ENCODE measurements at regions of chr3 and their contacts with region 1.

Region 1: GRCh38 chr3:4850211-4850927 is 128.9 kb upstream of the BHLHE40 start:
- DNase-seq: no peak
- CTCF ChIP-seq: no peak

Region 2: DNA sequence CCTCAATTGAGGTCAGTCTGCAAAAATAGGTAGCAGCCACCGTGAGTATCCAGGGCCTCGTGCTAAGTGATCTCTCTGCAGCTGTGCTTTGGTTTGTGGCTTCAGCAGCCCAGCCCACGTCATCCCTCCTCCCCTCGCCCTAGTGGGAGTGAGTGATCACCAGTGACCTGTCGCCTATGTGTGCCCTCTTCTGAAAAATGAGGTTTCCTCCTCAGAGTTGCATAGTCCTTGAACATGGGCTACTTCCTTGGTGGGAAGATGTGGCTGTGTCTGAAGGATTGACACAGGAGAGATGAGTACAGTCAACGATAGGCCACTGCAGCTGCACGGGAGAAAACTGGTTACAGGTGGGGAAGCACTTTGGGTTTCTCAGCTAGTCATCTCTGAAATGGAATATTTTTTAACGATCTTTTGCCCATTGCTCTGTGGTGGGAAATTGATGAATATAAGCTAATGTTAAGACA is 15.9 kb before region 1 on chr3:
- CTCF ChIA-PET with region 1: interaction called, 56 read pairs
- POLR2A ChIA-PET with region 1: no interaction called
- DNase-seq: peak; percentile 61
- CTCF ChIP-seq: no peak

Measured in GM10248 (cell line).